ENCODE measurements at regions of chr1 and their contacts with region 1.

Region 1: DNA sequence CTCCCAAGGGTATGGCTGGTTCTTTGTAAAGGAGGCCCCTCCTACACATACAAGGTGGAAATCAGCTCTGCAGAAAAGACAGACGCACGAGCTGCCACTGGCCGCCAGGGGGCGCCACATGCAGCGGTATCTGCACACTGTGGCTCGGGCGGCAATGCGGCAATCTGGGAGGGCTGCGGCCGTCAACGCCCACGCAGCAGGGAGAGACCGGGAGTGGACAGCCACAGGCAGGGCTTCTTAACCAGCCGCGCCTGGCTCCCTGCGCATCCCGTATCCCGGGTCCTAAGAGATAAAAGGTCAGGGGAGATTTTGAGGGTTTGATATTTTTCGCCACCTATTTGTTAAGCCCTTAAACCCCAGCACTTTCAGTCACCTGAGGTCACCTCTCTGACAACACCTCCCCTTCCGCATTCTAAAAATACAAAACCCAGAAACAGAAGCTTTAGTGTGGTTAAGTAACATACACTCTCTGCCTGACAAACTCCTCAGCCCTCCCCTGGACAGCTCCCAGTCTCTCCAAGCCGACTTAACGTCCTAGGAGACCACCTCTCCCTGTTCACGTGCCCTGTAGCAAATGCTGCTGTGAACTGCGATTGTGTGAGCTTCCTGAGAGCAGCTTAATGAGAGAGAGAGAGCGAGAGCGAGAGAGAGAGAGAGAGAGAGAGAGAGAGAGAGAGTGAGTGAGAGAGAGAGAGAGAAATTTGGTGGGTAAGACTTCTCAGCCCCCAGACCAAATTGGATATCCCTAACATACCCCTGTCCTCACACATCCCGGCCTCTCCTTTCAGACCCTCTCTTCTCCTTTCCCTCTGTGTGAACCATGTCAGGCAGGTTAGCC is 13.5 kb upstream of the KCNA2 start:
- H3K4me3 ChIP-seq: no peak overlapping the region
- H3K27ac ChIP-seq: no peak overlapping the region
- H3K4me1 ChIP-seq: no peaks in the 10 kb centered on the region
- CTCF ChIP-seq: peak; percentile 89; the same call in 1 of the 2 replicates

Region 2: DNA sequence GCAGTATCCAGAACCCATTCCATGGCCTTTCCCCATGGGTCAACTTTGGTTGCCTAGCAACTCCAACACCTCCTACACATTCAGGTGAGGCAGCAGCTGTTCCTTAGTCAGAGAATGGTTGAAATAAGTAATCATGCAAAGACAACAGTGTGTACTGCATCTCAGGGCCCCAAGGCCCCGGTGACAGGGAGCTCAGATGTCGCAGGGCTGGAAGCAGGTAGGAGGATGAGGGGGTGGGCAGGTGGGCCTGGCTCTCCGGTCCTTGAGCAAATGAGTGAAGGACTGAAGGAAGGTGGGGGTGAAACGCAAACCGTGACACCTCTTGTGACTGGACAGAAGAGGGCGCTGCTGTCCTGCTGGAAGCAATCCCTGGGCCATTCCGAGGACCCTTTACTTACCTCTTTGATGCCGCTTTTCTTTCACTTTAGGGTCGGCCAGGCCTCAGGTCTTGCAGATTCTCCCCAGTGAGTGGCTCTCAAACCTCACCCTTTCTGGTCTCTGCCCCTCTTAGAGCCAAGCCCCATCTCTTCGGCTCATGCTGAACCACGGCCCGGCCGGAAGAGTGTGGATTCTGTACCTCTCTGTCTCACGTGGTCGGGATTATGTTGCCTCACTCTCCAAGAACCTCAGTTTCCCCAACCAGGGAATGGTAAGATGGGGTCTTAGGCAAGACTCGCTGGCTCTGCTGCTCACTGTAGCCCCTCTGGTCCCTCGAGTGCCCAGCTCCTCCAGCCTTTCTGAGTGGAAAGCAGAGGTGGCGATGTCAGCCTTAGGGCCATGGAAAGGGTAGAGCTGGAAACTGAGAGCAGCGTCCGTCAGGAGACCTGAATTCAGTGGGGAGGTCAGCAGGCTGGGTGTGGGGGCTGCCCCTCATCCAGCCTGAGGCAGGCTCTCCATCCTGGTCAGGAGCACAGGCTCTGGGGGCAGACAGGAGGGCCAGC is 95.0 kb before region 1 on chr1:
- CTCF ChIA-PET with region 1: interaction called, 113 read pairs
- POLR2A ChIA-PET with region 1: interaction called, 5 read pairs
- H3K4me3 ChIP-seq: no peak overlapping the region
- H3K27ac ChIP-seq: no peak overlapping the region
- H3K4me1 ChIP-seq: no peaks in the 10 kb centered on the region
- CTCF ChIP-seq: peak; percentile 76

Region 3: DNA sequence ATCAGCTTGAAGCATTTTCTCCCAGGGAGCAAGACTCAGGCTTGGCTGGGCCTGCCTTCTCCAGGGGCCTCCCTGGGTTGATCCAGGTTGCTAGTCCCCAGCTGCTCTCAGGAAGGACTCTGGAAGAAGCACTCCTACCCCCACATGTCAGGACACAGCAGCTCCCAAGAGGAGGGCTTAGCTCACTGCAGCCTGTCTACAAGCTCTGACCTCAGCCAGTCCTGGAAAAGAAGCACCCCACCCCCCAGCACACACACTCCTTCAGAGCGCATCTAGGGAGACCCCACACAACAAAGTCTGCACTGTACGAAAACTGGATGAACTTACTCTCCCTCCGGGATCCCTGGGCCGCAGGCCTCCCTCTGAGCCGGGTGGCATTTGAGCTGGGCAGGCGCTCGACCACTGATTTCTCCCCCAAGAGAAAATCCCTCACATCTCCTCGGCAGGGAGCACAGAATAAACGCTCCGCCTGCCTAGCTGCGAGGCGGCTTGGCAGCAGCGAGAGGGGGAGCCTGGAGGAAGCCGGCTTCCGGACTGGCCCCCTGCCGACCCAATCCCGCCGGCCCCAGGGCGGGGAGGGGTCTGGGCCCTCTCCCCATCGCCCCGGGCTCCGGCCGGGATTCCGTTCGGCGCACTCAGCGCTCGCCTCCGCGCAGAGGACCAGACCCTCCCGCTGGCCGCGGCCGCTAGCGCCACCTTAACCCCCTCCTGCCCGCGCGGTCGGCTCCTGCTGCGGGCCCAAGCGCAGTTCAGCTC is 13.6 kb before region 1 on chr1 and contains the start of gene KCNA2:
- CTCF ChIA-PET with region 1: interaction called, 23 read pairs
- POLR2A ChIA-PET with region 1: no interaction called
- H3K4me3 ChIP-seq: peak within 1 kb of the TSS; percentile 43
- H3K27ac ChIP-seq: no peak within 1 kb of the TSS; the same call in 1 of the 2 replicates
- H3K4me1 ChIP-seq: no peaks in the 10 kb centered on the region
- CTCF ChIP-seq: peak; percentile 57

Region 4: DNA sequence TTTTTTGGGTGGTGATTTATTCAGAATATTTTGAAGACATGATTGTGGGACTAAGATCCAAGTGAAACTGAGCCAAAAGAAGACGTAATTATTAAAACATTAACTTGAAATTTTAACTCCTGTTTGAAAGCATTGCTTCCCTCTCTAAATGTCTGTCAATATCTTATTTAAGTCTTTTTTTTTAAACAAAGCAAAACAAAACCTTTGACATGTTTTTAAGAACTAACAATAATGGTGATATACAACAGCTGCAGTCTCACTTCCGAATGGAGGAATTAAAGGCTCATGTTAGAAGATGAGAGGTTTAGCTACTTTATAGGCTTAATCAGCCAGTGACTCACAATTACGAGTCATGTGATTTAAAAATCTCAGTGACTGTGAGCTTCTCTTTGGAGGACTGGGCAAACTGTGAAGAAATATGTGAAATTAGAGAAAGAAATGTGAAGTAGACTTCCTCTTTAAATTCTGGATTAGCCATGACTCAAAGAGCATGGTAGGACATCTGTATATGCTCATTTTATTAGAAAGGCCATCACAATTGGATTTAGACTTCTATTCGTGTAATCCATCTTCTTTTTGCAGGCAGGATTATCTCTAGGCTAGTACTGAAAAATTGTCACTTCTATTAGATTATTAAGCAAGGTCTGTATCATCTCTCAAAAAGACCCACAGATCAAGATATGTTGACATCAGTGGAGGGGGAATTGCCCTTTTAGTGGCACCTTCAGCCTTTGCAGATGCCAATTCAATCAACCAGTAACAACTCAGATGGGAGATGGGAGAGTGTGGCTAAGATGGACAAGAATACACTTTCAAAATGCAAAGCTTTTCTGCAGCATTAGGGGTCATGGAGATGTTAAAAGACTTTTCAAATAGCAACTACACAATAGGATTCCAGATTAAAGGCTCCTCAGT is 26.4 kb after region 1 on chr1:
- CTCF ChIA-PET with region 1: interaction called, 15 read pairs
- POLR2A ChIA-PET with region 1: no interaction called
- H3K4me3 ChIP-seq: no peak overlapping the region
- H3K27ac ChIP-seq: no peak overlapping the region
- H3K4me1 ChIP-seq: peaks cover 10% of the 10 kb centered on the region
- CTCF ChIP-seq: no peak

Region 5: DNA sequence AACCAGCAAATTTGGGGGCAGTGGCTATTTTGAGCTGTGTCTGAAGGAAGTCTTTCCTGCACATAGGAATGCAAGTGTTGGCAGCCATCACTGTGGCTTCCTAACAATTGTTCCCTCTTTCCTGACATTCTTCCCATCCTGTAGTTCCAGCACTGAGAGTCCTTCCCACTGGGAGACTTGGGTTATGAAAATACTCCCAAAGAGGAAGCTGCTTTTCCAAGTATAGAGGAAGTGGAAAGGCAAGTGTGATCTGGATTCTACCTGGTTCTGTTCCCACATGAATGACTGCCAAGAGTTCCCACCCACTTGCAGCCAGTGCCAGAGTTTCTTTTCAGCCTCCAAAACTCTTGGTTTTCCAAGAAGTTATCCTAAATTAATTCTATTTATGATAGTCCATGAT is 154.8 kb after region 1 on chr1:
- CTCF ChIA-PET with region 1: interaction called, 159 read pairs
- POLR2A ChIA-PET with region 1: no interaction called
- H3K4me3 ChIP-seq: no peak overlapping the region
- H3K27ac ChIP-seq: no peak overlapping the region
- H3K4me1 ChIP-seq: no peaks in the 10 kb centered on the region
- CTCF ChIP-seq: no peak